K562 (cell line): ENCODE measurements at regions of chr4 and their contacts with region 1.

Region 1: DNA sequence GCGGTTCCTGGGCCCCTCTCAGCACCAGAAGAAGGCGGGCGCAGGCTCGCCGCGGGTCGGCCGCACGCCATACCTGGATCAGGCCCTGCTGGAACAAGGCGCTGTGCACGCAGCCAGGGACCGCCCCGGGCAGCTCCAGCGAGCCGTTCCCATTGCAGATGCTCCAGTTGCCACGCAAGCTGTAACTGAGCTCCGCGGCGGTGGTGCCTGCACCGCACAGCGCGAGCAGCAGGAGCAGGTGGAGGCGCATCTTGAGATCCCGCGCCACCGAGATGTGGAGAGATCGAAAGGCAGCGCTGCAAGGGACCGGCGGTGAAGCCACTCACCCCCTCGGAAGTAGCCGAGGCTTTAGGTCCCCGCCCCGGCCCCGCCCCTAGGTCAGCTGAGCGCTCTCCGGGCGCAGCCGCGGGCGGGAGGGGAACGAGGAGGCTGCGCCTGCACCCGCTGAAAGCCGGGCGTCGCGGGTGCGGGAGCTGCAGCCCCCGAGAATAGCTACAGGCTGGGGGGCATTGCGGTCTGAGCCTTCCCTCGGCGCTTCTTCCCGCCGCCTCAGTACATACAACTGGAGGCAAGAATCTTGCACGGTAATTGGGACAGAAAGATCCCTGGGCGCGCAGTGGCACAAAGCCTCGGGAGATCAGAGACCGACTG is at the start of gene MANBA:
- DNase-seq: peak; percentile 89 to 94 (median 91)
- ATAC-seq: peak; percentile 98
- H3K4me3 ChIP-seq: peak within 1 kb of the TSS; percentile 71
- H3K27ac ChIP-seq: peak within 1 kb of the TSS; percentile 60
- H3K4me1 ChIP-seq: peaks cover 4 to 10% of the 10 kb centered on the region in 2 experiments; a peak in 4 of 5 replicates
- H3K27me3 ChIP-seq: no peaks in the 10 kb centered on the region
- CTCF ChIP-seq: 0 out of 6 replicates have a peak, but pooled peaks of 1 of the 3 experiments have one; percentile 5
- EP300 ChIP-seq: no peak; the same call in 1 of the 2 replicates
- POLR2A ChIP-seq: peak; percentile 72
- RAD21 ChIP-seq: 0 out of 4 replicates have a peak, but pooled peaks of 1 of the 2 experiments have one; percentile 2
- polyA plus RNA-seq, gene MANBA: 1.8 to 3.7 TPM

Region 2: GRCh38 chr4:102657206-102657605 is 103.6 kb before region 1 on chr4:
- CTCF ChIA-PET with region 1: no interaction called
- POLR2A ChIA-PET with region 1: no interaction called
- in situ Hi-C with region 1: no loop called
- intact Hi-C with region 1: no loop called
- DNase-seq: no peak
- ATAC-seq: no peak
- H3K4me3 ChIP-seq: no peak overlapping the region
- H3K27ac ChIP-seq: no peak overlapping the region
- H3K4me1 ChIP-seq: no peaks in the 10 kb centered on the region
- H3K27me3 ChIP-seq: no peaks in the 10 kb centered on the region
- CTCF ChIP-seq: no peak
- EP300 ChIP-seq: no peak
- POLR2A ChIP-seq: no peak
- RAD21 ChIP-seq: no peak

Region 3: GRCh38 chr4:102730968-102731534 is 29.7 kb before region 1 on chr4:
- CTCF ChIA-PET with region 1: no interaction called
- POLR2A ChIA-PET with region 1: no interaction called
- in situ Hi-C with region 1: no loop called
- intact Hi-C with region 1: no loop called
- DNase-seq: peak in 2 of 4 experiments; percentile 17 to 27
- ATAC-seq: peak; percentile 77
- H3K4me3 ChIP-seq: no peak overlapping the region
- H3K27ac ChIP-seq: no peak overlapping the region
- H3K4me1 ChIP-seq: peaks cover 7 to 14% of the 10 kb centered on the region in 2 experiments; a peak in 4 of 5 replicates
- H3K27me3 ChIP-seq: no peaks in the 10 kb centered on the region
- CTCF ChIP-seq: peak; percentile 35 to 50 (median 49); a peak in 3 of 6 replicates
- EP300 ChIP-seq: no peak
- POLR2A ChIP-seq: no peak
- RAD21 ChIP-seq: no peak

Region 4: DNA sequence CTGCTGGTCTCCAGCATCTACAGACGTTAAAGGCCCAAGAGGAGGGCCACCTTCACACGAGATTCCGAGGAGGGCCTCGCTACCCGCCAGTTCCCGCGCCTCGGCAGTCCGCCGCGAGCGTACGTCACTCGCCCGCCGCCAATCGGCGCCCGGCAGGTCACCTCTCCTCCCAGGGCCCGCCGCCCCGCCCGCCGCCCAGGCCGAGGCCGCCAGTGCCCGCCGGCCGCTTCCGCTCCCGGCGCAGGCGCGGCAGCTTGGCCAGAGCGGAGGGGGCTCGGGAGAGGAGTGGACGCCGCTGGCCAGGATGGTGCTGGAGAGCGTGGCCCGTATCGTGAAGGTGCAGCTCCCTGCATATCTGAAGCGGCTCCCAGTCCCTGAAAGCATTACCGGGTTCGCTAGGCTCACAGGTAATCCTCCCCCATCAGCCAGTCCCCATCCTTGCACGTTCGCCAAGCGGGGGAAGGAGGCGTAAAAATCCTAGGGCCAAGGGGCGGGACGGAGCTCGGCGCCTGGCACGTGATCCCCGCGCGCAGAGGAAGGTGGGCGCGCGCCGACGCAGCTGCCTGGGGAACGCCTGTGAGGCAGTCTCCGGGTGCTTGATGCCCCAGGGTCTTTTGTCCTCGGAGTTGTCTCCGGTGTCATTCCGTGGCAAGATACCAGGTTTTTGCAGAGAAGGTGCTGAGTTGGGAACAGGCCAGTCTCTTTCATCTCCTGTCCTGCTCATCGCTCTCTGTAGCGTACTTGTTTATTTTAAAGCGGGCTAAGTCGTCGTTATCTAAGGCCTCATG is 108.2 kb after region 1 on chr4 and contains the start of gene CISD2:
- CTCF ChIA-PET with region 1: no interaction called
- POLR2A ChIA-PET with region 1: no interaction called
- in situ Hi-C with region 1: no loop called
- intact Hi-C with region 1: loop called (anchors 5 kb)
- DNase-seq: peak; percentile 85 to 95 (median 88)
- ATAC-seq: peak; percentile 83
- H3K4me3 ChIP-seq: peak within 1 kb of the TSS; percentile 59
- H3K27ac ChIP-seq: peak within 1 kb of the TSS; percentile 98
- H3K4me1 ChIP-seq: peaks cover 8 to 10% of the 10 kb centered on the region in 2 experiments
- H3K27me3 ChIP-seq: no peaks in the 10 kb centered on the region
- CTCF ChIP-seq: no peak; a peak in 2 of 6 replicates
- EP300 ChIP-seq: peak; percentile 27; the same call in 1 of the 2 replicates
- POLR2A ChIP-seq: peak; percentile 90
- RAD21 ChIP-seq: no peak
- polyA plus RNA-seq, gene CISD2: 87.2 to 91.4 TPM